ENCODE measurements at regions of chr4 and their contacts with region 1.

Region 1: GRCh38 chr4:185203486-185204237 is at the start of gene CFAP97:
- DNase-seq: peak; percentile 75
- H3K4me3 Mint-ChIP-seq: peak within 1 kb of the TSS; percentile 99
- H3K27ac Mint-ChIP-seq: peak within 1 kb of the TSS; percentile 100
- H3K4me1 Mint-ChIP-seq: peaks cover 36% of the 10 kb centered on the region
- H3K27me3 Mint-ChIP-seq: peaks cover 1% of the 10 kb centered on the region
- total RNA-seq, gene CFAP97: 52.4 and 54.6 TPM in 2 replicates

Region 2: GRCh38 chr4:185142912-185143595 is 60.6 kb before region 1 on chr4 and contains the start of gene SLC25A4:
- intact Hi-C with region 1: loop called (anchors 2 kb)
- DNase-seq: peak; percentile 56
- H3K4me3 Mint-ChIP-seq: peak within 1 kb of the TSS; percentile 82
- H3K27ac Mint-ChIP-seq: no peak within 1 kb of the TSS
- H3K4me1 Mint-ChIP-seq: peaks cover 12% of the 10 kb centered on the region
- H3K27me3 Mint-ChIP-seq: peaks cover 71% of the 10 kb centered on the region
- total RNA-seq, gene SLC25A4: 2.3 and 2.7 TPM in 2 replicates

Region 3: DNA sequence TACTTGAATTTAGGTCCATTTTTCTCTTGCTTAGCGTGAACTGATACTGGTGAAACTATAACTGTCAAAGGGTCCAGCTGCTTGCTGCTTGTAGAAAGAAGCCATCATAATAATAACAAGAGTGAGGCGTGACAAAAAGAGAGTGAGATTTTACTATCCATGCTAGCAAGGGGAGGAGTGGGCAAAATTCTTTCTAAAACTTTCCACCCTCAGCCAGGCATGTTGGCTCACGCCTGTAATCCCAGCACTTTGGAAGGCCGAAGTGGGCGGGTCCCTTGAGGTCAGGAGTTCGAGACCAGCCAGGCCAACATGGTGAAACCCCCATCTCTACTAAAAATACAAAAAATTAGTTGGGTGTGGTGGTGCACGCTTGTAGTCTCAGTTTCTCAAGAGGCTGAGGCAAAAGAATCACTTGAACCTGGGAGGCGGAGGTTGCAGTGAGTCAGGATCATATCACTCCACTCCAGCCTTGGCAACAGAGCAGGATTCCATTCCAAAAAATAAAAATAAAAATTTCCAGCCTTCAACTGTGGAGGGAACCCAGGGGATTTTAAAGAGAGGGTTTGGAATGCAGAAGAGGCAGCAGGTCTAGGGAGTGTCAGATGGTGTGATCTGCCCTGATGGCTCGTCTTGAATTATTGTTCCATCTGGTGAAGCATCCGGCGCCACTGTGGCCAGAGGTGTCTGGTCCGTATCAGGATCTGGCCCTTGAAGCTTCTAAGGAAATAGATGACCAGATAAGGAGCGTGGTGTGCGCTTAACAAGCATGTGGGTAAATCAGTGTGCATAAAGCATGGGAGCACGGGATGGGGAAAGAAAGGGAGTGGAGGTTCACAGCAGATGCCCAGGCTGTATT is 140.3 kb after region 1 on chr4:
- intact Hi-C with region 1: loop called (anchors 2 kb)
- DNase-seq: no peak
- H3K4me3 Mint-ChIP-seq: peak overlapping the region; percentile 51
- H3K27ac Mint-ChIP-seq: peak overlapping the region; percentile 89
- H3K4me1 Mint-ChIP-seq: peaks cover 68% of the 10 kb centered on the region
- H3K27me3 Mint-ChIP-seq: no peaks in the 10 kb centered on the region

Region 4: GRCh38 chr4:185471235-185472102 is 267.8 kb after region 1 on chr4 and contains the start of gene CCDC110:
- intact Hi-C with region 1: loop called (anchors 1 kb)
- DNase-seq: peak; percentile 77
- H3K4me3 Mint-ChIP-seq: peak within 1 kb of the TSS; percentile 89
- H3K27ac Mint-ChIP-seq: peak within 1 kb of the TSS; percentile 47
- H3K4me1 Mint-ChIP-seq: peaks cover 4% of the 10 kb centered on the region
- H3K27me3 Mint-ChIP-seq: peaks cover 52% of the 10 kb centered on the region
- total RNA-seq, gene CCDC110: not detected in 2 replicates

Region 5: DNA sequence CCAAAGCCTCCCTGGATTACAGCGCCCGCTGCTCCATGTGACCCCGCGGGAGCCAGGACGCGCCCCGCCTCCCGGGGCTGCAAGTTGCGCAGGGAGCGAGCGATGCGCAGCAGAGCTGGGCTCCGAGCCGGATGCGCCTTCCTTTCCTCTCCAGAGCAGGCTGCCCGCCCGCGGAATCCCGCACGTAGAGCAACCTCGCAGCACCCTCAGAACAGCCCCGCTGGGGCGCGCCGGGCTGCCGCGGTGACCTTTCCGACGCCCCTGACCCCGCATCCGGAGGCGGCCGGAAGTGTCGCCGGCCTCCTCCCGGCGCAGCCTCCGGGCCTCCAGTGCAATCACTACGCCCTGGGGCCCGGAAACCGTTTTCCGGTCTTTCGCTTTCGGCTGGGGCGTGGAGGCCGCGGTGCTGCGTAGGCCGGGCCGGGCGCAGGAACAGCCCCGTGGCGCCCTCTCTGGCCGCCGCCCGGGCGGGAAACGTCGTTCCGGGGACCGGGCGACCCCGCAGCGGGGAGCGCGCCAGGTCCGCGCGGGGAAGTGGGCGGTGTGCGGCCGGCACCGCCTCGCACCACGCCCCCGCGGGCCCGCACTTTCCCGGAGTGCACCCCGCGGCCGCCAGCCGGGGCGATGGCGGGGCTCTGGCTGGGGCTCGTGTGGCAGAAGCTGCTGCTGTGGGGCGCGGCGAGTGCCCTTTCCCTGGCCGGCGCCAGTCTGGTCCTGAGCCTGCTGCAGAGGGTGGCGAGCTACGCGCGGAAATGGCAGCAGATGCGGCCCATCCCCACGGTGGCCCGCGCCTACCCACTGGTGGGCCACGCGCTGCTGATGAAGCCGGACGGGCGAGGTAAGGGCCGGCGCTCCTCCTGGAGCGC is 987.8 kb after region 1 on chr4 and contains the start of gene CYP4V2:
- intact Hi-C with region 1: loop called (anchors 5 kb)
- DNase-seq: peak; percentile 90
- H3K4me3 Mint-ChIP-seq: peak within 1 kb of the TSS; percentile 96
- H3K27ac Mint-ChIP-seq: peak within 1 kb of the TSS; percentile 96
- H3K4me1 Mint-ChIP-seq: peaks cover 28% of the 10 kb centered on the region
- H3K27me3 Mint-ChIP-seq: peaks cover 2% of the 10 kb centered on the region
- total RNA-seq, gene CYP4V2: 8.3 and 8.8 TPM in 2 replicates

Measured in activated T-helper 1 cell treated with anti-CD3 and anti-CD28 coated beads, Interleukin-12 subunit alpha, Interleukin-12 subunit beta, Interleukin-2, Interleukin-4 antibody, amounts not matched to agents 30 ng/mL and 10 ng/mL and 1 ng/mL, durations not matched to agents 14 hours and 24 hours and 36 hours (primary cell).